Naive thymus-derived CD4-positive, alpha-beta T cell (primary cell): ENCODE measurements at regions of chr17 and their contacts with region 1.

Region 1: GRCh38 chr17:67441052-67441927 is 64.2 kb downstream of the PITPNC1 start:
- DNase-seq: peak; percentile 30 to 90 (median 87)
- ATAC-seq: peak; percentile 94
- H3K4me3 ChIP-seq: peak overlapping the region; percentile 64
- H3K4me3 Mint-ChIP-seq: peak overlapping the region; percentile 75 to 88 (median 84)
- H3K27ac ChIP-seq: peak overlapping the region; percentile 93
- H3K27ac Mint-ChIP-seq: peak overlapping the region; percentile 95 to 100 (median 99)
- H3K4me1 ChIP-seq: peaks cover 66 to 87% of the 10 kb centered on the region in 2 donors
- H3K4me1 Mint-ChIP-seq: peaks cover 63 to 98% (median 90%) of the 10 kb centered on the region in 7 donors
- H3K27me3 ChIP-seq: no peaks in the 10 kb centered on the region
- H3K27me3 Mint-ChIP-seq: no peaks in the 10 kb centered on the region

Region 2: GRCh38 chr17:67343251-67343650 is 98.0 kb before region 1 on chr17:
- CTCF ChIA-PET with region 1: no interaction called
- POLR2A ChIA-PET with region 1: no interaction called
- intact Hi-C with region 1: no loop called
- DNase-seq: no peak
- ATAC-seq: no peak
- H3K4me3 ChIP-seq: no peak overlapping the region
- H3K4me3 Mint-ChIP-seq: no peak overlapping the region
- H3K27ac ChIP-seq: no peak overlapping the region
- H3K27ac Mint-ChIP-seq: peak overlapping the region in 5 of 9 donors; percentile 6 to 56 (median 17)
- H3K4me1 ChIP-seq: no peaks in the 10 kb centered on the region
- H3K4me1 Mint-ChIP-seq: no peaks in the 10 kb centered on the region
- H3K27me3 ChIP-seq: no peaks in the 10 kb centered on the region
- H3K27me3 Mint-ChIP-seq: no peaks in the 10 kb centered on the region

Region 3: GRCh38 chr17:67390646-67391384 is 50.5 kb before region 1 on chr17:
- CTCF ChIA-PET with region 1: interaction called, 11 read pairs
- POLR2A ChIA-PET with region 1: interaction called, 27 read pairs
- intact Hi-C with region 1: loop called (anchors 1 to 2 kb)
- DNase-seq: peak in 6 of 9 donors; percentile 50 to 74 (median 62)
- ATAC-seq: peak; percentile 89
- H3K4me3 ChIP-seq: peak overlapping the region; percentile 34
- H3K4me3 Mint-ChIP-seq: peak overlapping the region; percentile 66 to 90 (median 84)
- H3K27ac ChIP-seq: peak overlapping the region; percentile 76
- H3K27ac Mint-ChIP-seq: peak overlapping the region; percentile 85 to 99 (median 95)
- H3K4me1 ChIP-seq: peaks cover 29 to 46% of the 10 kb centered on the region in 2 donors
- H3K4me1 Mint-ChIP-seq: peaks cover 47 to 95% (median 73%) of the 10 kb centered on the region in 7 donors
- H3K27me3 ChIP-seq: no peaks in the 10 kb centered on the region
- H3K27me3 Mint-ChIP-seq: no peaks in the 10 kb centered on the region

Region 4: GRCh38 chr17:67400193-67400592 is 41.1 kb before region 1 on chr17:
- CTCF ChIA-PET with region 1: interaction called, 3 read pairs
- POLR2A ChIA-PET with region 1: interaction called, 20 read pairs
- intact Hi-C with region 1: loop called in 1 of 2 experiments (anchors 1 kb)
- DNase-seq: peak in 6 of 9 donors; percentile 64 to 80 (median 76)
- ATAC-seq: peak; percentile 62
- H3K4me3 ChIP-seq: peak overlapping the region; percentile 32
- H3K4me3 Mint-ChIP-seq: peak overlapping the region; percentile 66 to 93 (median 83)
- H3K27ac ChIP-seq: peak overlapping the region; percentile 83
- H3K27ac Mint-ChIP-seq: peak overlapping the region; percentile 82 to 100 (median 99)
- H3K4me1 ChIP-seq: peaks cover 9 to 77% of the 10 kb centered on the region in 2 donors
- H3K4me1 Mint-ChIP-seq: peaks cover 32 to 88% (median 77%) of the 10 kb centered on the region in 7 donors
- H3K27me3 ChIP-seq: no peaks in the 10 kb centered on the region
- H3K27me3 Mint-ChIP-seq: no peaks in the 10 kb centered on the region

Region 5: DNA sequence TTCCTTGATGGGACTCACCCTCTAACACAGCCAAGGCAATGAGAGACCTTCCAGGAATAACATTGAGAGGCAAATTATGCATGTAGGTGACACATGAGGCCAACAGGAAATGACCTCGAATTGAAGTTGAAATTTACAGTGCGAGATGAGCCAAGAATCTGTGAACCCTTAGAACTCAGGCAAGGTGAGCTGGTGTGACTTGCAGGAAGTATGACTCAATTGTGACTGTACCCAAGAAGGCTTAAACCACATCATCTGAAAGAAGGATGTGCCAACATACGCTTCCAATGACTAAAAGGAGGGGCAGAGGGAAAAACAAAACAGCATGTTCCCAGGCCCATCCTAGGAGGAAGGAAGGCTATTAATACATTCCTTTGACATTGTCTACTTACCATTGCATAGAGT is 19.4 kb before region 1 on chr17:
- CTCF ChIA-PET with region 1: interaction called, 20 read pairs
- POLR2A ChIA-PET with region 1: interaction called, 214 read pairs
- intact Hi-C with region 1: loop called (anchors 1 to 2 kb)
- DNase-seq: peak in 8 of 9 donors; percentile 46 to 86 (median 82)
- ATAC-seq: peak; percentile 97
- H3K4me3 ChIP-seq: peak overlapping the region; percentile 19
- H3K4me3 Mint-ChIP-seq: peak overlapping the region; percentile 8 to 79 (median 69)
- H3K27ac ChIP-seq: peak overlapping the region; percentile 82
- H3K27ac Mint-ChIP-seq: peak overlapping the region; percentile 90 to 99 (median 97)
- H3K4me1 ChIP-seq: peaks cover 51 to 71% of the 10 kb centered on the region in 2 donors
- H3K4me1 Mint-ChIP-seq: peaks cover 54 to 100% (median 87%) of the 10 kb centered on the region in 7 donors
- H3K27me3 ChIP-seq: no peaks in the 10 kb centered on the region
- H3K27me3 Mint-ChIP-seq: no peaks in the 10 kb centered on the region

Region 6: GRCh38 chr17:67469208-67469895 is 28.1 kb after region 1 on chr17:
- CTCF ChIA-PET with region 1: interaction called, 48 read pairs
- POLR2A ChIA-PET with region 1: interaction called, 176 read pairs
- intact Hi-C with region 1: no loop called
- DNase-seq: peak in 2 of 9 donors; percentile 28 to 57
- ATAC-seq: peak; percentile 58
- H3K4me3 ChIP-seq: peak overlapping the region; percentile 53
- H3K4me3 Mint-ChIP-seq: peak overlapping the region; percentile 66 to 90 (median 82)
- H3K27ac ChIP-seq: peak overlapping the region; percentile 74
- H3K27ac Mint-ChIP-seq: peak overlapping the region; percentile 82 to 97 (median 92)
- H3K4me1 ChIP-seq: peaks cover 32 to 63% of the 10 kb centered on the region in 2 donors
- H3K4me1 Mint-ChIP-seq: peaks cover 39 to 84% (median 65%) of the 10 kb centered on the region in 7 donors
- H3K27me3 ChIP-seq: no peaks in the 10 kb centered on the region
- H3K27me3 Mint-ChIP-seq: no peaks in the 10 kb centered on the region

Region 7: GRCh38 chr17:67689534-67690177 is 248.4 kb after region 1 on chr17:
- CTCF ChIA-PET with region 1: no interaction called
- POLR2A ChIA-PET with region 1: no interaction called
- intact Hi-C with region 1: no loop called
- DNase-seq: peak in 8 of 9 donors; percentile 30 to 72 (median 58)
- ATAC-seq: peak; percentile 76
- H3K4me3 ChIP-seq: no peak overlapping the region
- H3K4me3 Mint-ChIP-seq: no peak overlapping the region
- H3K27ac ChIP-seq: no peak overlapping the region
- H3K27ac Mint-ChIP-seq: peak overlapping the region in 1 of 9 donors; percentile 31
- H3K4me1 ChIP-seq: no peaks in the 10 kb centered on the region
- H3K4me1 Mint-ChIP-seq: peaks cover 0 to 7% (median 4%) of the 10 kb centered on the region in 7 donors
- H3K27me3 ChIP-seq: no peaks in the 10 kb centered on the region
- H3K27me3 Mint-ChIP-seq: no peaks in the 10 kb centered on the region